ENCODE measurements at regions of chr19 and their contacts with region 1.

Region 1: GRCh38 chr19:16338470-16339360 is 14.1 kb downstream of the KLF2 start:
- DNase-seq: peak in 6 of 9 experiments; percentile 55 to 83 (median 62)
- ATAC-seq: peak; percentile 49
- H3K4me3 ChIP-seq: peak overlapping the region; percentile 25 to 38
- H3K4me3 Mint-ChIP-seq: peak overlapping the region; percentile 81
- H3K27ac ChIP-seq: peak overlapping the region; percentile 28 to 76
- H3K27ac Mint-ChIP-seq: peak overlapping the region; percentile 94
- H3K4me1 ChIP-seq: peaks cover 71% of the 10 kb centered on the region
- H3K4me1 Mint-ChIP-seq: peaks cover 61% of the 10 kb centered on the region
- H3K27me3 ChIP-seq: no peaks in the 10 kb centered on the region
- H3K27me3 Mint-ChIP-seq: no peaks in the 10 kb centered on the region
- CTCF ChIP-seq: no peak

Region 2: GRCh38 chr19:16363133-16363851 is 24.6 kb after region 1 on chr19:
- CTCF ChIA-PET with region 1: interaction called, 200 read pairs
- POLR2A ChIA-PET with region 1: interaction called, 2,627 read pairs
- intact Hi-C with region 1: loop called in 1 of 2 experiments (anchors 2 kb)
- DNase-seq: no peak
- ATAC-seq: no peak
- H3K4me3 ChIP-seq: no peak overlapping the region
- H3K4me3 Mint-ChIP-seq: no peak overlapping the region
- H3K27ac ChIP-seq: peak overlapping the region in 1 of 2 experiments; percentile 91
- H3K27ac Mint-ChIP-seq: peak overlapping the region; percentile 85
- H3K4me1 ChIP-seq: peaks cover 95% of the 10 kb centered on the region
- H3K4me1 Mint-ChIP-seq: peaks cover 81% of the 10 kb centered on the region
- H3K27me3 ChIP-seq: no peaks in the 10 kb centered on the region
- H3K27me3 Mint-ChIP-seq: no peaks in the 10 kb centered on the region
- CTCF ChIP-seq: no peak